Heart right ventricle (tissue), 16 donors: ENCODE measurements at regions of chr6 and their contacts with region 1.

Region 1: DNA sequence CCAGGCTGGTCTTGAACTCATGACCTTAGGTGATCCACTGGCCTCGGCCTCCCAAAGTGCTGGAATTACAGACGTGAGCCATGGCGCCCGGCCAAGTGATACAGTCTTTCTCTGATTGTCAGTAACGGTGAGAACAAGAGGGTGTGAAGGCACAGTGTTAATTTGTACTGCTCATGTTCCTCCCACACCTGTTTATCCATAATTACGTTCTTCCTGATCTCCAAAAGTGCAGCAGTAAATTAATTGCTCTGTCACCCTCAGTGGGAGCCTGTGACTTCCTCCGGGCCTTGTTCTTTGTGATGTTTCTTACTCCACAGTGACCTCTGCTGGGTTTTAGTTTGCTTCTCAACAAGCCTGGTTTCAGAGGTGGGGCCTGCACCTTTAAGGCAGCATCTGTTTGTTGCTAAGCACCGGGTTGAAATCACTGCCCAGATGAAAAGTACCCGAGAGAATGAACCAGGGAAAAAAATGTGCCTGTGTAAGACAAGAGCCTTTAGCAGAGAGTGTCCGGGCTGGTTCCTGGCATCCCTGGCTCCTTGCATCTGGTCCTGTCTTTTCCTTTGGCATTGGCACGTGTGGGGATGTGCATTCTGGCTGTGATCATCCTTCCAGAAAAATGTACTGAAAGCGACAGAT is 89.1 kb upstream of the CLDN20 start:
- DNase-seq: peak; percentile 23 to 75
- ATAC-seq: peak; percentile 73 to 88 (median 82)
- H3K4me3 ChIP-seq: no peak overlapping the region
- H3K27ac ChIP-seq: no peak overlapping the region
- H3K4me1 ChIP-seq: peaks cover 0 to 24% (median 13%) of the 10 kb centered on the region in 9 donors
- H3K27me3 ChIP-seq: no peaks in the 10 kb centered on the region
- CTCF ChIP-seq: peak; percentile 27 to 79 (median 70)

Region 2: DNA sequence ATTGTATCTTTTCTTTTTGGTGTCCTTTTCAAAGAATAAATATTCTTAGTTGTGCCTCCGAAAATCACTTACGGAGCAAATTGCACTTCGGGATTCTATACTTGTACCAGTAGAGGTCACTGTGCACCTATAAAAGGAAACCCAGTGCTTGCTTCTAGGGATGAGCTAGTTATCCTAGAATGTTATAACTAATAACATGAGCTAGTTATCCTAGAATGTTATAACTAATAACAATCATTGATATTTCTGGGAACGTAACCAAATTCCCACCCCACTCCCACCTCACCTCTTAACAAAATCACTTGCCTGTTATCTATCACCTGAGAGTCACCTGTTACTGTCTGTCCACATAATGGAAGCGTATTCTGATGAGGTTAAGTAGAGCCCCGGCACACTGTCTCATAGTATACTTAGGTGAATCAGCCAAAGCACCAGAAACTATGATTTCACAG is 306.5 kb before region 1 on chr6:
- intact Hi-C with region 1: loop called in 8 of 10 experiments (anchors 2 to 10 kb)
- DNase-seq: no peak
- ATAC-seq: peak in 3 of 8 donors; percentile 34 to 60 (median 46)
- H3K4me3 ChIP-seq: no peak overlapping the region
- H3K27ac ChIP-seq: no peak overlapping the region
- H3K4me1 ChIP-seq: peaks cover 0 to 27% (median 4%) of the 10 kb centered on the region in 9 donors
- H3K27me3 ChIP-seq: no peaks in the 10 kb centered on the region
- CTCF ChIP-seq: peak; percentile 51 to 86 (median 76)

Region 3: DNA sequence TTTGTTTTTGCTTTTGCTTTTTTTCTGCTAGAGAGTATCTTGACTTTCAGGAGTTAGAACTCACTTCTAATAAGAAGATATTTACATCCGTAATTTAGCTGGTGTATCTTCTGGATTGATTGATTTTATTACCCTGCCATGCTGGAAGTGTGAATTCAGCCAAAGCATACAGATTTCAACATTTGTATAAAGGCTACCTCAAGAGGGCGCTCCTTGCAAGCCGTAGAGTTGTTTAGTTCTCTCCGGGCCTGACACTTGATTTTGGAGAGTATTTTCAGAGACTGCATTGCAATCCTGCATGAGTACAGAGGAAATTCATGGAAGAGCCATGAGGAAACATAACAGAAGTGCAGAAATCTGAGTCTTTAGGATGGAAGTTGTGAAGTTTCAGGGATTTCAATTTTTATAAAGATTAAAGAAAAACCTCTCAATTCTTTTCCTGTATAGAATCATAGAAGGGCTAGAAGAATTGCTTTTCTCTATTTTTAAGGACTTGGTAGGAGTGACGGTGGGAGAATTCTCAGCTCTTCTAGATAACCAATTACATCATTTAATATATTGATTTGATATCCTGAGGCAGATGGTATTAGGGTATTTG is 246.3 kb before region 1 on chr6:
- intact Hi-C with region 1: loop called (anchors 1 to 5 kb)
- DNase-seq: peak in 1 of 2 donors; percentile 58
- ATAC-seq: peak in 6 of 8 donors; percentile 49 to 71 (median 64)
- H3K4me3 ChIP-seq: no peak overlapping the region
- H3K27ac ChIP-seq: no peak overlapping the region
- H3K4me1 ChIP-seq: peaks cover 0 to 29% (median 9%) of the 10 kb centered on the region in 9 donors
- H3K27me3 ChIP-seq: no peaks in the 10 kb centered on the region
- CTCF ChIP-seq: peak; percentile 55 to 88 (median 80)

Region 4: GRCh38 chr6:155256122-155256795 is 81.6 kb after region 1 on chr6:
- intact Hi-C with region 1: no loop called
- DNase-seq: peak in 1 of 2 donors; percentile 29
- ATAC-seq: peak in 6 of 8 donors; percentile 12 to 50 (median 44)
- H3K4me3 ChIP-seq: no peak overlapping the region
- H3K27ac ChIP-seq: no peak overlapping the region
- H3K4me1 ChIP-seq: peaks cover 0 to 21% (median 6%) of the 10 kb centered on the region in 9 donors
- H3K27me3 ChIP-seq: no peaks in the 10 kb centered on the region
- CTCF ChIP-seq: no peak

Region 5: GRCh38 chr6:155314092-155314772 is 139.5 kb after region 1 on chr6 and contains the start of gene TFB1M:
- intact Hi-C with region 1: loop called in 4 of 10 experiments (anchors 5 to 10 kb)
- DNase-seq: peak; percentile 98
- ATAC-seq: peak; percentile 99 to 100 (median 99)
- H3K4me3 ChIP-seq: peak within 1 kb of the TSS; percentile 61 to 94 (median 80)
- H3K27ac ChIP-seq: peak within 1 kb of the TSS; percentile 32 to 90 (median 84)
- H3K4me1 ChIP-seq: peaks cover 0 to 28% (median 14%) of the 10 kb centered on the region in 9 donors
- H3K27me3 ChIP-seq: no peaks in the 10 kb centered on the region
- CTCF ChIP-seq: no peak
- total RNA-seq, gene TFB1M: 12.8 to 23.1 (median 17.9) TPM